ENCODE measurements at regions of chr15 and their contacts with region 1.

Region 1: DNA sequence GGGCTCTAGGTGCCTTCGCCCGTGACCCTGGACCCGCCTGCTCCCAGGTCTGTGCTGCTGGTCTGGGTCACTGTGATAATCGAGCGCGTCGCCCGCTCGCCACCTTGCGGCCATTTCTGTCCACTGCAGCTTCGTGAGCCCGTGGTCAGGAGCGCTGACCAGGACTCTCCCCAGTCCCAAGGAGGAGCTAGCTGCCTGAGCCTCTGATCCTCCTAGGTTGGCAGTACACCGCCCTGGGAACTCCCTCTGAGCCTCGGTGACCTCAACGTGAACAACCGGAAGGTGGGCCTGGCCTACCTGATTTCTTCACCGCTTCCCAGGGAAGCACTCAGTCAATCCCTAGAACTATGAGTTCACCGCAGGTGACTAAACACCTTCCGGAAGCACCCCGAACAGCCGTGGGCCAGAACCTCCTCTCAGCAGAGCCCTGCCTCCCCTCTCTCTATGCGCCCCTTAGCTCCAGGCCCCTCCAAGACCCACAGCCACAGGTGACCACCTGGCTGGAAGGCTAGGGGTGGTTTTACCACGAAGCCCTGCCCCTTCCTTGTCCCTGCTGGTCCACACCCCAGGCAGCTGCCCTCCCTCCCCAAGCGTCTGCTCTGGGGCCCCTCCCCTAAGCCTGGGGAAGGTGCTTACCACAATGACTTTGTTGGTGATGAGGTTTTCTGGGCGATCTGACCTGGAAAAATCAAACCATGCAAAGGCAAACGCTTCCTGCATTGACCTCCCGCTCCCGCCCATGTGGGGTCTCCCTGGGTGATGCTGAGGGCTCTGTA is 9.7 kb downstream of the PLA2G4D start:
- DNase-seq: peak; percentile 45 to 73
- ATAC-seq: peak; percentile 71 to 88 (median 84)
- H3K4me3 ChIP-seq: no peak overlapping the region
- H3K27ac ChIP-seq: no peak overlapping the region
- H3K4me1 ChIP-seq: peaks cover 0 to 14% (median 2%) of the 10 kb centered on the region in 9 donors
- H3K27me3 ChIP-seq: peaks cover 0 to 25% (median 5%) of the 10 kb centered on the region in 7 donors
- CTCF ChIP-seq: peak; percentile 91 to 95 (median 94)

Region 2: GRCh38 chr15:41989259-41989933 is 95.3 kb before region 1 on chr15:
- intact Hi-C with region 1: loop called in 1 of 10 experiments (anchors 1 kb)
- DNase-seq: peak; percentile 87 to 89
- ATAC-seq: peak; percentile 82 to 95 (median 90)
- H3K4me3 ChIP-seq: no peak overlapping the region
- H3K27ac ChIP-seq: no peak overlapping the region
- H3K4me1 ChIP-seq: peaks cover 0 to 9% (median 0%) of the 10 kb centered on the region in 9 donors
- H3K27me3 ChIP-seq: peaks cover 0 to 3% (median 0%) of the 10 kb centered on the region in 7 donors
- CTCF ChIP-seq: peak; percentile 97 to 99 (median 99)

Region 3: GRCh38 chr15:42118650-42119445 is 34.2 kb after region 1 on chr15:
- intact Hi-C with region 1: loop called in 1 of 10 experiments (anchors 2 kb)
- DNase-seq: no peak
- ATAC-seq: peak in 3 of 8 donors; percentile 30 to 42 (median 39)
- H3K4me3 ChIP-seq: no peak overlapping the region
- H3K27ac ChIP-seq: no peak overlapping the region
- H3K4me1 ChIP-seq: peaks cover 0 to 11% (median 0%) of the 10 kb centered on the region in 9 donors
- H3K27me3 ChIP-seq: peaks cover 0 to 4% (median 0%) of the 10 kb centered on the region in 7 donors
- CTCF ChIP-seq: no peak

Measured in heart right ventricle (tissue), 16 donors.